Activated naive CD8-positive, alpha-beta T cell treated with anti-CD3 and anti-CD28 coated beads, Interleukin-2, amount 10 ng/mL, durations not matched to agents 7 days and 5 days (primary cell): ENCODE measurements at regions of chr1 and their contacts with region 1.

Region 1: DNA sequence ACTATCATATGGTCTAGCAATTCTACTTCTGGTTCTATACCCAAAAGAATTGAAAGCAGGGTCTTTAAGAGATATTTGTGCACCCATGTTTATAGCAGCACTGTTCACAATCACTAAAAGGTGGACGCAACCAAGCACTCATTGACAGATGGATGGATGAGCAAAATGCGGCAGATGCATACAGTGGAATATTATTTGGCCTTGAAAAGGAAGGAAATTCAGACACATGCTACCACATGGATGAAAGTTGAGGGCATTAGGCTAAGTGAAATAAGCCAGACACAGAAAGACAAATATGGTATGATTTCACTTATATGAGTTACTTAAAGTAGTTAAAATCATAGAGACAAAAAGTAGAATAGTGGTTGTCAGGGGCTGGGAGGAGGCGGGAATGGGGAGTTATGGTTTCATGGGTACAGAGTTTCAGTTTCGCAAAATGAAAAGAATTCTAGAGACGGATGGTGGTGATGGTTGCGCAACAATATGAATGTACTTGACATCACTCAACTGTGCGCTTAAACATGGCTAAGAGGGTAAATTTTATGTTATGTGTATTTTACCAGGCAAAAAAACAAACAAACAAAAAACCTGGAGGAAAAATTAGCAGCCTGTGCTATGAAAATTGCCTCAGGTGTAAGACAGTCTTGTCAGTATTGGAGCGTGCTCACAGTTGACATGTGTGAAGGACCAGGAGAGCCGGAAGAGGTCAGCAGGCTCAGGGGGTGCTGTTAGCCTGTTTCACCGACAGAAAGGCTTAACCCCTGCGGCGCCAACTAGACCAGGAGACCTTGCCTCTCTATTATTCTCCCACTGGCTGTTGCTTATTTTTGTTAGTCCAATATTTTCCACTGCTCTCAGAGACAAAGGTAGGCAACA is 26.5 kb downstream of the CD247 start:
- DNase-seq: no peak
- ATAC-seq: peak; percentile 70
- H3K4me3 Mint-ChIP-seq: peak overlapping the region; percentile 85
- H3K27ac Mint-ChIP-seq: peak overlapping the region; percentile 93
- H3K4me1 Mint-ChIP-seq: peaks cover 79% of the 10 kb centered on the region
- H3K27me3 Mint-ChIP-seq: no peaks in the 10 kb centered on the region

Region 2: DNA sequence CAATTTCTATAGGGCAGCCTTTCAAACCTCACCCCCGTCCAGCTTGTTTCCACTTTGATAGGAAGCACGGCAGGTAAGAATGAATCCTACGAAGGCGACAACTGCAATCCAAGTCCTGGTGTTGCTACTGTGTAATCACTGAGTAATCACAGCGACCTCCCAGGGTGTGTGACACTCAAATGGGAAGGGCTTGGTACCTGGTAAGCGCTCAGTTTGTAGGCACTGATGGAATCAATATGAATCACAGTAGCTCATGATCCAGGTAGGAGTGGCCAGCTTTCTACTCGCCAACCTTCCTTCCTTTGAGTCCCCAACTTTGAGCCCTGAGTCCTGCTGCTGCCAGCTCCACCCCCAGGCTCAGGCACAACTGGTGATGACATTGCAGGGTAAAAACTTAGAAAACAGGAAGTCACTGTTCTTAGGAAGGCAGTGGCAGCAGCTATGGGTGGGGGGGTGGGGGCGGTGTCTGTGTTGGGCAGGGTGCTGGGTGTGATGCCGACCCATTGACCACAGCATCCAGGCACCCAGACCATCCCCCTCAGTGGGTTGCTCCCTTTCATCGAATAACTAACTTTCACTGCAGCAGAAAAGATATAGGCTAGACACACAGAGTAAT is 44.2 kb before region 1 on chr1:
- POLR2A ChIA-PET with region 1: interaction called, 11 read pairs
- DNase-seq: peak; percentile 62
- ATAC-seq: peak; percentile 87
- H3K4me3 Mint-ChIP-seq: peak overlapping the region; percentile 79
- H3K27ac Mint-ChIP-seq: peak overlapping the region; percentile 95
- H3K4me1 Mint-ChIP-seq: peaks cover 65% of the 10 kb centered on the region
- H3K27me3 Mint-ChIP-seq: no peaks in the 10 kb centered on the region

Region 3: DNA sequence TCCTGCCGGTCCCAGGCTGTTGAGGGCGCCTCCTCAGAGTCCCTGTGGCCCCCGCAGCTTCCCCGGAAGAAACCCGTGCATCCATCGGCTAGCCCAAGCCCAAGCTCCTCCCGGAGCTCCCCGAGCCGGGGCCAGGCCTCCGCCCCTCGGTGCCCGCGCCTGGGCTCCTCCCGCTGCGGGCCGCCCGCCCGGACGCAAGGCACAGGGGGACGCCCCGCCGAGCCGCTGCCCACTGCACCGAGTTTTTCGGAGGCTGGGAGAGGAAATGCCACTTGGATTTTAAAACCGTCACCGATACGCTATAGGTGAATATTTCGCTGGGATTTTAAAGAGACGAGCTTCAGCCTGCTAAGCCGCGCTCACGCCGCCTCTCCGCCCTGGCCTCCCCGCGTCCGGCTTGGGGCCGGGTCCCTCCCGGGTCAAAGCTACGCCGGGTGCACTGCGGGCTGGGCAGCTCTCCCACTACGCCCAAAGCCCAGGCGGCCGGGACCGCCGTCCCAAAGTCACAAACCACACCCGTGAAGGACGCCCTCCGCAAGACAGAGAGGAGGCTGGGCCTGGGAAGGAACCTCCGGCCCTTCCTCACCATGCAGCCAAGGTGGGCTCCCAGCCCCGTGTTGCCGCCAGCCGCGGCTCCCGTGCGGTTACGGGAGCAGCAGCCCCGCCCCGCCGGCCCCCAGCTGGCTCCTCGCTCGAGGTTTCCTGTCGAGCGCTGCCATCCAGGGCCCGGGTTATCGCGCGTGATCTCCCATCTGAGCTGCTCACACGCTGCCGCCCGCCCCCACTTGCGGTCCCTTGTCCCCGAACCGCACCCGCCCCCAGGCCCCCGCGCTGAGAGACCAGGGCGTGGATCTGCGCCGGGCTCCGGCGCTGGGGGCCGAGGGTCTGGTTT is 36.7 kb before region 1 on chr1:
- POLR2A ChIA-PET with region 1: interaction called, 12 read pairs
- DNase-seq: peak; percentile 84
- ATAC-seq: peak; percentile 67
- H3K4me3 Mint-ChIP-seq: peak overlapping the region; percentile 78
- H3K27ac Mint-ChIP-seq: peak overlapping the region; percentile 80
- H3K4me1 Mint-ChIP-seq: peaks cover 47% of the 10 kb centered on the region
- H3K27me3 Mint-ChIP-seq: no peaks in the 10 kb centered on the region